ENCODE measurements at regions of chr4 and their contacts with region 1.

Region 1: DNA sequence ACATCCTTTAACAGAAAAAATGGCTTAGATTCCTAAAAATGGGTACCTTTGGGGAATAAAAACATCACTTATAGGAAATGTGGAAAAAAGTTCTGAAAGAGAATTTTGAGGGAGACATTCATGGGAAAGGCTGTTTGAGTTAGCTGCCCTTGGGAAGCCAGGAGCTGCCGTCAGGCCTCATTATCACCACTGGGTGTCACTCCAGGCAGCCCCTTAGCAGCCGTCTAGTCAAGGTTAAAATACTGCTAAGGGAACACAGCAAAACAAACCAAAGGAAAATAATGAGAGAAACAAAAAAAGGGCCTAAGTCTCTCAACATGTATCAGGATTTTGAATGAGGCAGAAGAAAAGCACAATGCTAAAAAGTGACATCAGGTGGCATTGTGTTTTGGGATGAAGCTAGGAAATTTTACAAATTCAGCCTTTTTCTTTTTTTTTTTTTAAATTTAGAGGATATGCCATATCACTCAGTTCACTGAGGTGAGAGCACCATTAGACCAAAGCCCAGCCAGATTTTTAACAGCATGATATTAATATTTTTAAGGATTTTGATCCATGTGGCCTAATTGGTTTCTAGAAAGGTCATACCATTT is 235.3 kb downstream of the GPAT3 start:
- DNase-seq: peak; percentile 30
- ATAC-seq: peak; percentile 66 to 83

Region 2: GRCh38 chr4:83677656-83678055 is 93.6 kb before region 1 on chr4:
- intact Hi-C with region 1: no loop called
- DNase-seq: no peak
- ATAC-seq: no peak

Region 3: GRCh38 chr4:83855044-83855443 is 83.8 kb after region 1 on chr4:
- intact Hi-C with region 1: loop called in 1 of 2 experiments (anchors 10 kb)
- DNase-seq: no peak
- ATAC-seq: no peak

Region 4: DNA sequence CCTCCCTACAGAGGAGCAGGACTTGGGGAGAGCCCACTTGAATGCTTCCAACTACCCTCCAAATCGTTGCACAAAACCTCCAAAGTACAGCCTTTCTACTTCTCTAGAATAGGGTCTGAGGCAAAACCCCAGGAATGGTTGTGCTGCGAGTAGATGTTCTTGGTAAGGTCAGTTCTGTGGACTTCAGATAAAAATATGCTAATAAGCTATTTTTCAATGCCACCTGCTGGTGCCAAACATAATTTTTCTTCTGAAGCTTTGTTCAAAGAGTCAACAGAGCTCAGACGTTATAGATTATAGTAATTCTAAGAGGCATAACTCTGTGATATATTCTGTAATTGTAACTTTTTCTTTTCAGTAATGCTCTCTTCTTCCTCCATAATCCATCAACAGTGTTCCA is 190.4 kb after region 1 on chr4:
- intact Hi-C with region 1: loop called in 1 of 2 experiments (anchors 5 kb)
- DNase-seq: no peak
- ATAC-seq: peak in 1 of 2 donors; percentile 27

Measured in left cardiac atrium (tissue), 4 donors.